Naive thymus-derived CD4-positive, alpha-beta T cell (primary cell): ENCODE measurements at regions of chrX and their contacts with region 1.

Region 1: DNA sequence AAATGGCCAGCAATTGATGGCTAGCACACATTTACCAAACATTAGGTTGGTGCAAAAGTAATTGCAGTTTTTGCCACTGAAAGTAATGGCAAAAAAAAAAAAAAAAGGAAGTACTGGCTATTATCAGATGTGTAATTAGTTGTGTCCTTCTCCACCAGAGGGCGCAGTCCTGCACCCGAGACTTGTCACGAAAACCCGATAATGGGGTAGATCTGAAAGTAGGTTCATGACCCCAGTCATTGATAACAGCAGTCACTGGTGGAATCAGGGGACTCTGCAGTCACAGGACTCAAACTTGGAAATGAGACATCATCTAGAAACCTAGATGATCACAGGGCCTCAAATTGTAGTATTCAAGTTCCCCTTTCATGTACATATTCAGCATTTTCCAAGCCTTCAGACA is 13.1 kb upstream of the ACOT9 start:
- DNase-seq: peak in 8 of 9 donors; percentile 23 to 63 (median 47)
- ATAC-seq: peak; percentile 84
- H3K4me3 ChIP-seq: no peak overlapping the region
- H3K4me3 Mint-ChIP-seq: peak overlapping the region in 2 of 10 donors; percentile 33 to 54
- H3K27ac ChIP-seq: no peak overlapping the region
- H3K27ac Mint-ChIP-seq: no peak overlapping the region
- H3K4me1 ChIP-seq: no peaks in the 10 kb centered on the region
- H3K4me1 Mint-ChIP-seq: peaks cover 0 to 6% (median 0%) of the 10 kb centered on the region in 7 donors
- H3K27me3 ChIP-seq: no peaks in the 10 kb centered on the region
- H3K27me3 Mint-ChIP-seq: no peaks in the 10 kb centered on the region

Region 2: DNA sequence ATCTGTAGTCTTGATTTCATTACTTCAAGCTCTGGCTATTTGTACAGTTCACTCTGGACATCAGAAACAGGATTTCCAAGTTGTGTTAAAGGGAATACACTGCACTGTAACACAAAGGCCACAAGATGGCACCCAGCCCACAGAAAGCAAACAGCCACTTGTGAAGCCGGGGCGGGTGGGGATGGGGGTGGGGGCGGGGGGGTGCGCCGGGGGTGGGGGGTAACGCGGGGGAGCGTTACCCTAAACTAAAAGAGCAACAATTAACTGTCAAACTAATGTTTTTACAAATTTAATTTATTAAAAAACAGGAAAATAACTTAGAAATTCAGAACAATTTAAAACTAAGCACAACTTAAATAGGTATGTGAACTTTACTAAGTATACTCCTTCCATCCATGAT is 61.6 kb before region 1 on chrX:
- CTCF ChIA-PET with region 1: no interaction called
- POLR2A ChIA-PET with region 1: no interaction called
- intact Hi-C with region 1: loop called in 1 of 2 experiments (anchors 2 kb)
- DNase-seq: peak in 7 of 9 donors; percentile 7 to 40 (median 34)
- ATAC-seq: peak; percentile 78
- H3K4me3 ChIP-seq: no peak overlapping the region
- H3K4me3 Mint-ChIP-seq: no peak overlapping the region
- H3K27ac ChIP-seq: no peak overlapping the region
- H3K27ac Mint-ChIP-seq: no peak overlapping the region
- H3K4me1 ChIP-seq: no peaks in the 10 kb centered on the region
- H3K4me1 Mint-ChIP-seq: peaks cover 0 to 4% (median 0%) of the 10 kb centered on the region in 7 donors
- H3K27me3 ChIP-seq: no peaks in the 10 kb centered on the region
- H3K27me3 Mint-ChIP-seq: no peaks in the 10 kb centered on the region

Region 3: GRCh38 chrX:23773601-23774175 is 17.5 kb after region 1 on chrX:
- CTCF ChIA-PET with region 1: interaction called, 6 read pairs
- POLR2A ChIA-PET with region 1: no interaction called
- intact Hi-C with region 1: loop called (anchors 1 to 2 kb)
- DNase-seq: peak in 7 of 9 donors; percentile 21 to 72 (median 64)
- ATAC-seq: peak; percentile 100
- H3K4me3 ChIP-seq: no peak overlapping the region
- H3K4me3 Mint-ChIP-seq: peak overlapping the region; percentile 36 to 81 (median 71)
- H3K27ac ChIP-seq: peak overlapping the region; percentile 71
- H3K27ac Mint-ChIP-seq: peak overlapping the region; percentile 92 to 98 (median 94)
- H3K4me1 ChIP-seq: peaks cover 0 to 6% of the 10 kb centered on the region in 2 donors
- H3K4me1 Mint-ChIP-seq: peaks cover 0 to 15% (median 9%) of the 10 kb centered on the region in 7 donors
- H3K27me3 ChIP-seq: no peaks in the 10 kb centered on the region
- H3K27me3 Mint-ChIP-seq: no peaks in the 10 kb centered on the region